ENCODE measurements at regions of chr17 and their contacts with region 1.

Region 1: GRCh38 chr17:50783193-50783660 is 15.9 kb upstream of the ANKRD40CL start:
- DNase-seq: peak; percentile 27
- H3K4me3 ChIP-seq: no peak overlapping the region
- H3K27me3 ChIP-seq: no peaks in the 10 kb centered on the region
- CTCF ChIP-seq: peak; percentile 99

Region 2: DNA sequence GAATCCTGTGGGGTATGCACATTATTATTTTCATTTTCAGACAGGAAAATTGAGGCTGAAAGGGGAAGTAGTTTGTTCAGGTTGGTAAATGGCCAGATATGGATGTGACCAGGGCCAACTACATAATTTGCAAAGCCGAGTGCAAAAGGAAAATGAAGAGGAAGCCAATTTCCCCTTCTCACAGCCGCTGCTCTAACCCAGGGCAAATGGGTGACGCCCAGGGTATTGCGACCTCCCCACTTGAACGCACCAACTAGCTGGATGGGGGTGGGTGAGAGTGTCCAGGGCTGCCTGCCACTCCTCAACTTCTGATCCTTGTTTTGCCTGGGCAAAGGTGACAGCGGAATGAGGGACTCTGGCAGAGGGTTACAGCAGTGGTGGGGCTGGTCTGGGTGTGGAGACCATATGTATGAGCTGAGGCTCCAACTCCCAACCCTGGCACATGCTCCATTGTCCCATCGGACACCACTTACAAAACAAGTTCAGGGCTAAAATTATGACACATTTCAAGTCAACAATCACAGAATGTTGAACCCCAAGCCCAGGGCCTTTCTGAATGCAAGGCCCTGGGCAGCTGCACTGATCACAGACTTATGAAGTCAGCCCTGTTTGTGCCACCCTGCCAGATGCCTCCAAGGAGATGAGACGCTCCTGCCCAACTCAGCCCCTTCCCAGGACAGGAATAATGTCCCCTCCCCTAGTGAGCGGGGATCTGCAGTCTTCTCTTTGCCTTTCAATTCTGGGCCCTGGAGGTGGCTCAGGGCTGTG is 17.6 kb before region 1 on chr17:
- CTCF ChIA-PET with region 1: interaction called, 40 read pairs
- POLR2A ChIA-PET with region 1: no interaction called
- DNase-seq: no peak
- H3K4me3 ChIP-seq: no peak overlapping the region
- H3K27me3 ChIP-seq: peaks cover 3% of the 10 kb centered on the region; the same call in 1 of the 2 replicates
- CTCF ChIP-seq: no peak

Region 3: DNA sequence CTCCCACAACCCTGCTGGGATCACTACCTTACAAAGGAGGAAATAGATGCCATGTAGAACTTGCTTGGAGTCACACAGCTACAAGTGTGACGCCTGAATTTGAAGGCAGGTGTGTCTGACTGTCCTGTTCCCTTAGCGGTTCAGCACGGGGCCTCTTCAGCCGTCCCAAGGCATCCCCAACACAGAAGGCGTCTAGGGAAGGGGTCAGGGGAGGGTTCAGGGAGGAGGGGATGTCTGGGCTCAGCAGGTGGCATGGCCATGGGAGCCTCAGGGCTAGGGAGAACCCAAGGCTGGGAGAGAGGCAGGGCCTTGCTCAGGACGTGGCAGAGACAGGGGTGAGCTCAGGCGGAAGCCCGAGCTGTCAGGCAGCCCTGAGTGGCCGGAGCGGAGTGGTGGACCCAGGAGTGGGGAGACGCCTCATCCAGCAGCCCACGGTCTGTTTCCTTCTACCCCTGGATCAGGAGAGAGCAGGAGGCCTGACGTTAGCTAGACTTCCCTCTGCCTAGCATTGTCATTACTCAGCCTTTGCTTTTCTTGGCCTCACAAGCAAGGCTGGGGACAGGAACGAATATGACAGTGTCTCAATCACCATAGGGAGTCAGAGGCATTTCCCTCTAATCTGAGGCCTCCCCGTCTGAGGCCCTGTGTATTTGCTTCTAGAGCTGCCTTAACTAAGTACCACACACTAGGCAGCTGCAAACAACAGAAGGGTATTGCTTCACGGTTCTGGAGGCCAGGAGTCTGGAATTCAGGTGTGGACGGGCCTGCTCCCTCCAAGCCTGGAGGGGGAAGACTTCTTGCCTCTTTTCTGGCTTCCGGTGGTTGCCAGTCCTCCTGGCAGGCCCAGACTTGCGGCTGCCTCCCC is 15.4 kb after region 1 on chr17:
- CTCF ChIA-PET with region 1: interaction called, 35 read pairs
- POLR2A ChIA-PET with region 1: interaction called, 4 read pairs
- DNase-seq: no peak
- H3K4me3 ChIP-seq: no peak overlapping the region
- H3K27me3 ChIP-seq: no peaks in the 10 kb centered on the region
- CTCF ChIP-seq: no peak

Region 4: GRCh38 chr17:50828508-50829170 is 45.4 kb after region 1 on chr17:
- CTCF ChIA-PET with region 1: interaction called, 16 read pairs
- POLR2A ChIA-PET with region 1: no interaction called
- DNase-seq: no peak
- H3K4me3 ChIP-seq: no peak overlapping the region
- H3K27me3 ChIP-seq: no peaks in the 10 kb centered on the region
- CTCF ChIP-seq: no peak

Region 5: GRCh38 chr17:50841949-50842354 is 58.7 kb after region 1 on chr17:
- CTCF ChIA-PET with region 1: interaction called, 164 read pairs
- POLR2A ChIA-PET with region 1: no interaction called
- DNase-seq: no peak
- H3K4me3 ChIP-seq: no peak overlapping the region
- H3K27me3 ChIP-seq: no peaks in the 10 kb centered on the region
- CTCF ChIP-seq: peak; percentile 87

Region 6: DNA sequence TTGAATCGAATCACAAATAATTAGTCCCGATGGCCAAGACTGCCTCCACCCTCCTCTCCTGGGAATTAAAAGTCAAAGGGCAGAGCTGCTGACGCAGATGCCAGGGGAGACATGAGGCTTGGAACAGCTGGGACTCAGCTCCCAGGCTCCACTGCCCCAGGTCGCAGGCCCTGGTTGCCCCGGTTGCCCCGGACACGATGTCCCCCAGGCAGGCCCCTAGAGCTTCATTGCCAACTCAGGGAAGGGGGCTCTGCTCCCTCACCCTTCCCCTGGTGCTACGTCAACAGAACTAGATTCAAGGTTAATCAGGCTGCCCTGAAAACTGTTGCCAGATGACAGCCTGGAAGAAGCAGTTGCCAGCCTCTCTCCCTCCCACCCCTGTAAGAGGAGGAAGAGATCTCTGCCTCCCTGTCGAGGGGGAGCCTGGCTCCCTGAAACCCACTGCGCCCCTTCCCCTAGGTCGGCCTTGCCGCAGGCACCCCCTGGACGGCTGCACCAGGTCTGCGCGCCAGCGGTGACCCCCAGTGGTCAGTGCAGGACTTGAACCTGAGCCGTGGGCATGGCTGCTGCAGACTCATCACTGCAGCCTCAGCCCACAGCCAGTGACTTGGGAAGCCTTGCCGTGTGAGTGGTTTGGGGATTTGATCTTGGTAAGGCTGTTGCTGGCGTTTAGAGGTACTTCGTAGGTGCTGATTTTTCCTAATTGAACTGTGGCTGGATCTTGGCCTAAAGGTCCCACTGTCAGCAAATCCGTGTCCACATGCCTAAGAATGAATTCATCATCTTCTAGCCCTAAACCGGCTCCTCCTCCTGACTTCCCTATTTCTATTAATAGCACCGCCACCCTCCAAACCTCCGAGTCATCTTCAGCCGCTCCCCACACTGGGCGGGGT is 167.0 kb after region 1 on chr17:
- CTCF ChIA-PET with region 1: interaction called, 14 read pairs
- POLR2A ChIA-PET with region 1: no interaction called
- DNase-seq: peak; percentile 71
- H3K4me3 ChIP-seq: no peak overlapping the region
- H3K27me3 ChIP-seq: no peaks in the 10 kb centered on the region
- CTCF ChIP-seq: peak; percentile 73

Measured in BJ (cell line).